ENCODE measurements at regions of chr1 and their contacts with region 1.

Region 1: DNA sequence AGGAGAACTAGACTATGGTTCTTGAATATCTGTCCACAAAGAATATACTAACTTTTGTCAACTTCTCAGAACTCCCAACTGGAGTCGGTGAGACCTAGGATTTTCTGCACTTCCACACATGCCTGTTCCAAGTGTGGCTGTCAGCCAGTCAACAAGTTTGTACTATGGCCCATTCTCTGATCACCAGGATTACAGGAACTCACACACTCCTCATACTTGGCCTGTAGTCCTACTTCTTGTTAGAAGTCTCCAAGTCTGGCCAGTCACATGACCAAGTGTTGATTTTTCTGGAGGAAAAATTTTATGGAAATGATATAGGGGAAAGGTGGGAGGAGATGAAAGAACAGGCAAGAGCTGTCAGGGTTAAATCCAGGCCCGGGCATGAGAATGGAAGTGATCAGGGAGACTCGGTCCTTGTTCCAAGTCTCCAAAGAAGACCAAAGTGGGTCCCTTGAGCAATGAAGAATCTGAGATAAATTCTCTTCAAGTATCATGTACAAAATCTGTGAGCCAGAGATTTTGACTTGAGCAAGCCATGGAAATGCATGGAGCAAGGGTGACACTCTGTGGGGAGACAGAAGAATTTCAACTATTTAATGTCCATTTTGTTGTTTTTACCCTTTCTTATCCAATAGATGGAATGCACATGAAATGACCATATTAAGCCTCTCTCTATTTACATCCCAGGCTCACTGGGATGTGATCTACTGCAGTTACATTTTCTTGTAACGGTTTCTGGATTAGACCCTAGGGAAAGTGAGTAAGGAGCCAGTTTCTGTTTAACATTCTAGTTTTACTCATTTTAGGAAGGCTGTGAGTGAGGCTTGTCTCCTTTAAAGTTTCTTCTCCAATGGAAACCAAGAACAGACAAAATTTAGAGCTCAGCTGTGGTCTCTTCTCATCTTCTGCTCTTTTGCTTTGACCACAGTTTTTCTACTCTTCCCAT is 320.9 kb downstream of the ASTN1 start:
- DNase-seq: no peak
- H3K4me3 ChIP-seq: no peak overlapping the region
- H3K27me3 ChIP-seq: no peaks in the 10 kb centered on the region
- CTCF ChIP-seq: peak; percentile 52

Region 2: DNA sequence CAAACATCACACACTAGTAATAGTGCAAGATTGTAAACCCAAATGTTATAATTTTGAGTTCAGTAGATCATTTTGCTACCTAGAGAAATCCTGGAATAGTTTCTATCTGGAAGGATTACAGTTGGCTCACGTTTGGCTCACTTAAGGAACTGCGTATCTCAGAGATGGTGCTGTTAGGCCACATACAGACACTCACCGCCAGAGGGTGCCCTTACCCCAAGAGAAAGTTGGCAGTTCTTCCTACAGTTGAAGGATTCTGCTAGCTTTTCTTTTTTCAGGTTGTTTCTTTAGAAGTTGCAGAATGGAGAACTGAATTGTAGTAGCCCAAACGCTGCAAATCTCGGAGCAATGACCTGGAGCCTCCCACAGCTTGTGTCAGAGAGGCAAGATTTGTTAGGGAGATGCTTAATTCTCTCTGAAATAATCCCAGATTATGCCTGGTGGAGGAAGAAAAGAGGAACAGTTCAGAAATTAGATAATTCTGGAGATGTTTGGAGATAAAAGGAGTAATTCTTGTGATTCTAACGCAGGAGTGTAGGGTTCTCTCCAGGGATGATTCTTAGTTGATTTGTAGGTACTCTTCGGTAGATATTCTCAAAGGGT is 468.6 kb before region 1 on chr1:
- CTCF ChIA-PET with region 1: interaction called, 14 read pairs
- POLR2A ChIA-PET with region 1: no interaction called
- DNase-seq: peak; percentile 7
- H3K4me3 ChIP-seq: no peak overlapping the region
- H3K27me3 ChIP-seq: no peaks in the 10 kb centered on the region
- CTCF ChIP-seq: peak; percentile 90

Region 3: DNA sequence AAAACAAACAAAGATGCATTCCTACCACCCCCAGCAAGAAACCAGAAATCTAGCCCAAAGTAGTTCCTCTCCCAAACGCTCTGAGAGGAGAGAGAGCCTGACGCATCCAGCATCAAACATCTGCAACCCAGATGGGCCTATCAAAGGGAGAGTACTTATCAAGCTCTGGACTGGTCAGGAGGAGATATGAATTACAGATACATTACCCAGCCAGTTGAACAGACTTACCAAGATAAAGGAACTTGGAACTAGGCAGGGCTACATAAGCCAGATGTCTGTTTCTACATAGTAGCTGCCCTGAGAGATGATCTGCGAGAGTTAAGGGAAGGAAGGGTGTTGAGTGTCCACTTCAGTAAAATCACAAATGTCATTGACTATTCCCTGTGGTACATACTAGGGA is 242.3 kb before region 1 on chr1:
- CTCF ChIA-PET with region 1: no interaction called
- POLR2A ChIA-PET with region 1: no interaction called
- DNase-seq: peak; percentile 10
- H3K4me3 ChIP-seq: no peak overlapping the region
- H3K27me3 ChIP-seq: no peaks in the 10 kb centered on the region
- CTCF ChIP-seq: no peak

Region 4: DNA sequence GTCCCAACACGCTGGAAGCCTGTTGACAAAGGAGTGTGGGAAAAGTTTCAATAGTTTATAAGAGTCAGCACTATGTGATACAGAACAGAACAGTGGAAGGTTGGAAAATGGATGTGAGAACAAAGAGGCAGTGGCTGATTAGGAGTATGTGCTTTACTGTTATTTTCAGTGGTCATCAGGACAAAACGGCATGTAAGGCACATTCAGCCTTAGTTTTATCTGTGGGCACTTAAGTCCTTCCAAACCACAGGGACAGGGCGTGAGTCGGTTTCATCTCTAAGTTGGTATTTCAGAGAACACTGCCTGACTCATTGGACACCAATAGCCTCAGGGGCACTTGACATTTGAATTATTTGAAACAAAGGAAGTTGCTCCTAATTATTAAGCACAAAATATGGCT is 14.0 kb after region 1 on chr1:
- CTCF ChIA-PET with region 1: no interaction called
- POLR2A ChIA-PET with region 1: no interaction called
- DNase-seq: peak; percentile 26
- H3K4me3 ChIP-seq: no peak overlapping the region
- H3K27me3 ChIP-seq: no peaks in the 10 kb centered on the region
- CTCF ChIP-seq: no peak

Region 5: GRCh38 chr1:177181631-177182291 is 338.1 kb after region 1 on chr1:
- CTCF ChIA-PET with region 1: no interaction called
- POLR2A ChIA-PET with region 1: no interaction called
- DNase-seq: no peak
- H3K4me3 ChIP-seq: peak overlapping the region; percentile 26
- H3K27me3 ChIP-seq: peaks cover 13% of the 10 kb centered on the region
- CTCF ChIP-seq: peak; percentile 92